Esophagus muscularis mucosa (tissue), 4 donors: ENCODE measurements at regions of chr10 and their contacts with region 1.

Region 1: DNA sequence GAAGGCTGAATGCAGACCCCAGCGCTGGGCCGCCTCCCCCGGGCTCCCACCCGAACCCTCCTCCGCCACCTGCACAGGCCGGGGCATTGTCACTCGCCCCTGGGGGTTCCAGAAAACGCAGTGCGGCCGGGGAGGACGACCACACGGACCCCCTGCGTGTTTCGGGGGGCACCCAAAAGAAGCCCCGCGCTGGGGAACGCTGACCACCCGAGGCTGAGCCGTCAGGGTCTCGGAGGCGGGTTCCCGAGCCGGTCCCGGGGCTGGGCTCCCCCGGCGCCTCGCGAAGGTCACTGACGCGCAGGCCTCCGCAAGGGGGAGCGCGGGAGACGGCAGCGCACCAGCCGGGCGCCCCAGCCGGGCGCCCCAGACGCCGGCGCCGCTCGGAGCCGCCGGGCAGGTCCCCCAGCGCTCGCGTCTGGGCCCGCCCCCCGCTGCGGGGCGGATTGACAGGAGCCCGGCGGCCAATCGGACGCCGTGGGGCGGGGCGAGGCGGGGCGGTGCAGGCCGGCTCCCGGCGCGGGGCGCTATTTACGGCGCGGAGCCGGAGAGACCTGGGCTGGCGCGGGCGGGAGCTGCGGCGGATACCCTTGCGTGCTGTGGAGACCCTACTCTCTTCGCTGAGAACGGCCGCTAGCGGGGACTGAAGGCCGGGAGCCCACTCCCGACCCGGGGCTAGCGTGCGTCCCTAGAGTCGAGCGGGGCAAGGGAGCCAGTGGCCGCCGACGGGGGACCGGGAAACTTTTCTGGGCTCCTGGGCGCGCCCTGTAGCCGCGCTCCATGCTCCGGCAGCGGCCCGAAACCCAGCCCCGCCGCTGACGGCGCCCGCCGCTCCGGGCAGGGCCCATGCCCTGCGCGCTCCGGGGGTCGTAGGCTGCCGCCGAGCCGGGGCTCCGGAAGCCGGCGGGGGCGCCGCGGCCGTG is at the start of gene BAMBI:
- DNase-seq: peak; percentile 94
- H3K4me3 ChIP-seq: peak within 1 kb of the TSS; percentile 77 to 85 (median 81)
- H3K27ac ChIP-seq: peak within 1 kb of the TSS; percentile 58 to 74 (median 70)
- H3K4me1 ChIP-seq: peaks cover 23 to 39% (median 32%) of the 10 kb centered on the region in 4 donors
- H3K27me3 ChIP-seq: peaks cover 0 to 52% (median 0%) of the 10 kb centered on the region in 4 donors
- CTCF ChIP-seq: peak; percentile 59 to 76 (median 61)
- EP300 ChIP-seq: no peak
- POLR2A ChIP-seq: peak; percentile 69
- total RNA-seq, gene BAMBI: 6.2 to 8.4 (median 8.1) TPM

Region 2: DNA sequence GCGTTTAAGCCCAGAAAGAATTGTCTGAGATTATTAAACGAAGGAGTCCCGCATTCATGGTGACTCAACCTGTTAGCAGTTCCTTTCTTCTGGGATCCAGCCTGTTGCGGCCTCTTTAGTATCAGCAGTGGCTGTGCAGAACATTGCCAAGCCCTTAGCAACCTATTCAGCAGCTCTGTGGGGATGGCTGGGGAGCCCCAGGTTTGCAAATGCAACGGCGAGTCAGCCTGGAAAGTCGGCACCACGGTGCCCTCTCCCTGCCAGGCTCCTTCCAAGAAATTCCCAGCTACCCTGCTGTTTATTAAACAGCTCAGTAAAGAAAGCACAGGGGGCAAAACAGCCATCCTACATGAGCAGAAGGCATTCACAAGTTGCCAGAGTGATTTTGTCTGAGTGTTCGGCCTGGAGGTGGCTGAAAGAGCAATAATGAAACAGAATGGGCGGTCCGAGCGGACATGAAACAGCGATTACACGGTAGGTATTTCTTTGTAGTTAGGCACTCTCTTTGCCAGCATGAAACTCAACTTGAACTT is 198.4 kb after region 1 on chr10:
- intact Hi-C with region 1: loop called (anchors 10 kb)
- DNase-seq: no peak
- H3K4me3 ChIP-seq: no peak overlapping the region
- H3K27ac ChIP-seq: no peak overlapping the region
- H3K4me1 ChIP-seq: peaks cover 12 to 15% (median 13%) of the 10 kb centered on the region in 4 donors
- H3K27me3 ChIP-seq: no peaks in the 10 kb centered on the region
- CTCF ChIP-seq: no peak
- EP300 ChIP-seq: no peak
- POLR2A ChIP-seq: no peak

Region 3: GRCh38 chr10:28991326-28992270 is 314.4 kb after region 1 on chr10:
- intact Hi-C with region 1: loop called (anchors 5 kb)
- DNase-seq: peak; percentile 84
- H3K4me3 ChIP-seq: no peak overlapping the region
- H3K27ac ChIP-seq: no peak overlapping the region
- H3K4me1 ChIP-seq: peaks cover 0 to 6% (median 0%) of the 10 kb centered on the region in 4 donors
- H3K27me3 ChIP-seq: no peaks in the 10 kb centered on the region
- CTCF ChIP-seq: peak; percentile 71 to 77 (median 73)
- EP300 ChIP-seq: no peak
- POLR2A ChIP-seq: no peak